Activated naive CD8-positive, alpha-beta T cell treated with anti-CD3 and anti-CD28 coated beads, Interleukin-2, amount 10 ng/mL, durations not matched to agents 7 days and 5 days (primary cell): ENCODE measurements at regions of chr7 and their contacts with region 1.

Region 1: DNA sequence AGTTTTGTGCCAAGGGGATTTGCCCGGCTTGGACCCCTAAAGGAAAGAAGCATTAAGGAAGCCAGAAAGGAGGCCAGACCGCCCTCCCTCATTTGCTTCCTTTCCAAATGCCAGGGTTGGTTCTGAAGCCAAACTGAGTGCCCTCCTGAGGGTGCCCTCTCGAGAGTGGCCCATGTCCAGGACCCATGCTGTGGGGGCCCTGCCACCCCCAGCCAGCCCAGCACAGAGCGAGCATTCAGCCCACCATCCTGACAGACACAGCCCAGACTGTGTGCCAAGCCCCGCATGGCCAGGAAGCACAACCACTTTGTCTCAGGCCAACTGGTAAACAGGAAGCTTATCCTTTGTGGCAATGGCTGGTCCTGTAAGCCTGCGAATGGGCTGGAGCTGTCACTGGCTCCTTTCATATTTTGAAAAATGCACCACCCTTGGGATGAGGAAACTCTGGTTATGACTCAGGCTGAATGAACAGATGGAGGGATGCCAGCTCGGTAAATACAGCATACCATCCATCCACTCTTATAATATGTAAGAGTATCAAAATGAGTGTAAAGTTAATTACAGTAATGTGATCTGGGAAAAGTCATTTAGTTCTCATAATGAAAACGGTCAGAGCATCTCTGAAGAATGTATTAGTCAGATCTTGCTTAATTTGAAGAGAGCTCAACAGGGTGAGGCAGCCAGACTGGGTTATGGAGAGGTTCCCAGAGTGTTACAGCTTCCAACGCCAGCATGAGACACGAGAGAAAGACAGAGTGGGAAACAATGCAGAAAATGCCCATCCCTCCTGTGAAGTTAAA is 65.0 kb downstream of the STK17A start:
- DNase-seq: no peak
- ATAC-seq: peak; percentile 8
- H3K4me3 Mint-ChIP-seq: peak overlapping the region; percentile 74
- H3K27ac Mint-ChIP-seq: peak overlapping the region; percentile 85
- H3K4me1 Mint-ChIP-seq: peaks cover 86% of the 10 kb centered on the region
- H3K27me3 Mint-ChIP-seq: no peaks in the 10 kb centered on the region

Region 2: GRCh38 chr7:43465581-43466554 is 182.0 kb before region 1 on chr7:
- POLR2A ChIA-PET with region 1: no interaction called
- DNase-seq: no peak
- ATAC-seq: no peak
- H3K4me3 Mint-ChIP-seq: no peak overlapping the region
- H3K27ac Mint-ChIP-seq: no peak overlapping the region
- H3K4me1 Mint-ChIP-seq: no peaks in the 10 kb centered on the region
- H3K27me3 Mint-ChIP-seq: peaks cover 5% of the 10 kb centered on the region

Region 3: DNA sequence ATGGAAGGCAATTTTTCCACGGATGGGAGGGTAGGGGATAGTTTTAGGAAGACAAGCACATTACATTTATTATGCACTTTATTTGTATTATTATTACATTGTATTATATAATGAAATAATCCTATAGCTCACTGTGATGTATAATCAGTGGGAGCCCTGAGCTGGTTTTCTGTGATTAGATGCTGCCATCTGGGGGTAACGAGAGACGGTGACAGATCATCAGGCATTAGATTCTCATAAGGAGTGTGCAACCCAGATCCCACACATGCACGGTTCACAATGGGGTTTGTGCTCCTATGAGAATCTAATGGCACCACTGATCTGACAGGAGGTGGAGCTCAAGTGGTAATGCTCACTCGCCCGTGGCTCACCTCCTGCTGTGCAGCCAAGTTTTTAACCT is 168.8 kb before region 1 on chr7:
- POLR2A ChIA-PET with region 1: no interaction called
- DNase-seq: no peak
- ATAC-seq: no peak
- H3K4me3 Mint-ChIP-seq: no peak overlapping the region
- H3K27ac Mint-ChIP-seq: no peak overlapping the region
- H3K4me1 Mint-ChIP-seq: no peaks in the 10 kb centered on the region
- H3K27me3 Mint-ChIP-seq: peaks cover 19% of the 10 kb centered on the region

Region 4: DNA sequence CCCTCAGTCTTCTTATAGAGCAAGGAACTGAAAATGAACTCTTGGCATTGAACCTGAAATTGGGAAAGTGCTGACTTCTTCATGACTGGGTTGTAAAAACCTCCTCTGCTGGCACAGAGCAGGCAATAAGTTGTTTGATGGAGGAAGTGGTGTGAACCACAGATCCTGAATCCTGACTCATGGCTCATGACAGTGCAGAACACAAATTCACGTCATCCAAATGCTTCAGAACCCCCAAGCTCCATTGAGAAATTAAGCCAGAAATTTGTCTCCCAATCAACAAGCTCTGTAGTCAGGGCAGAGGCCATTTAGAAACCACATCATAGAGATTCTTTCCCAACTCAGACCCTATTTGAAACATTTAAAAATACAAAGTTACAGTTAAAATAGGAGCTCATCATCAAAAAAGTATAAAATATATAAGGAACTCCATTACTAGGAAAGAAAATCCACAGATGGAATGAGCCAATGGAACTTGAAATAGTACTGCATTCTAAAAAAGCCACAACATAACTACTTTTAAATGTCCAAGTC is 75.3 kb before region 1 on chr7:
- POLR2A ChIA-PET with region 1: no interaction called
- DNase-seq: no peak
- ATAC-seq: peak; percentile 74
- H3K4me3 Mint-ChIP-seq: no peak overlapping the region
- H3K27ac Mint-ChIP-seq: no peak overlapping the region
- H3K4me1 Mint-ChIP-seq: peaks cover 27% of the 10 kb centered on the region
- H3K27me3 Mint-ChIP-seq: peaks cover 3% of the 10 kb centered on the region

Region 5: GRCh38 chr7:43700059-43700501 is 52.2 kb after region 1 on chr7:
- POLR2A ChIA-PET with region 1: interaction called, 27 read pairs
- DNase-seq: no peak
- ATAC-seq: peak; percentile 48
- H3K4me3 Mint-ChIP-seq: no peak overlapping the region
- H3K27ac Mint-ChIP-seq: no peak overlapping the region
- H3K4me1 Mint-ChIP-seq: peaks cover 49% of the 10 kb centered on the region
- H3K27me3 Mint-ChIP-seq: no peaks in the 10 kb centered on the region

Region 6: DNA sequence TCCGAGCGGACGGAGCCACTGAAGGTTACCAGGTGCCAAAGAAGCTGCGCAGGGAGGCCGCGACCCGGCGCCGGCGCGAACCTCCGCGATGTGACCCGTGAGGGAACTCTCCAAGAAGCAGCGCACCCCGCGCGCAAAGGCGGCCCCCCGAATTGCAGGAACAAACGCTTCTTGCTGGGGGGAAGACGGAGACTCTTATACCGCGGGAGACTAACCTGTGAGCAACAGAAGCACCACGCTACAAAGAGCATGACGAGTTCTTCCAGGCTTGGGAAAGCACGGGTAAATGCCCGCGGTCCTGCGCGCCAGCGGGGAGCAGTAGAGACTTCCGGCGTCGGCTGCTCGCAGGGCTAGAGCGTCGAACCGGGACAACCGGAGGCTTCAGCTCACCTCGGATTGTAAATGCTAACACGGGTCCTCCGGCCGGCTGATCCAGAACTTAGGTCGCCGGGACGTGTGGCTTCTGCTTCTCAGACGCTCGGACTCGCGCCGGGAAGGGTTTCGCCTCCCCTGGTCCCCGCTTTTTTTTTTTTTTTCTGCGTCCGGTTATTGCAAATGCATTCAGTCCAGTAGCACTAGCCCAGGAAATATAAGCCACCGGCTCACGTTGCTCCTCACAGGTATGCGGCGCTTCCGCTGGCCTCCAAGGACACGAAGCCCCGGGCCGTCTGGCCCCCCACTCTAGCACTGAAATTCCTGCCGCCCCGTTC is 81.5 kb after region 1 on chr7 and contains the start of gene COA1:
- POLR2A ChIA-PET with region 1: no interaction called
- DNase-seq: peak; percentile 81
- ATAC-seq: peak; percentile 89
- H3K4me3 Mint-ChIP-seq: peak within 1 kb of the TSS; percentile 93
- H3K27ac Mint-ChIP-seq: peak within 1 kb of the TSS; percentile 85
- H3K4me1 Mint-ChIP-seq: peaks cover 23% of the 10 kb centered on the region
- H3K27me3 Mint-ChIP-seq: peaks cover 5% of the 10 kb centered on the region
- total RNA-seq, gene COA1: 72.7 to 80.2 TPM